ENCODE measurements at regions of chr4 and their contacts with region 1.

Region 1: GRCh38 chr4:36285784-36286480 is 4.5 kb downstream of the DTHD1 start:
- DNase-seq: peak; percentile 72
- H3K4me3 Mint-ChIP-seq: peak overlapping the region; percentile 45
- H3K27ac Mint-ChIP-seq: peak overlapping the region; percentile 91
- H3K4me1 Mint-ChIP-seq: peaks cover 64% of the 10 kb centered on the region
- H3K27me3 Mint-ChIP-seq: no peaks in the 10 kb centered on the region

Region 2: GRCh38 chr4:36187723-36188333 is 98.1 kb before region 1 on chr4:
- intact Hi-C with region 1: loop called (anchors 5 kb)
- DNase-seq: no peak
- H3K4me3 Mint-ChIP-seq: no peak overlapping the region
- H3K27ac Mint-ChIP-seq: no peak overlapping the region
- H3K4me1 Mint-ChIP-seq: peaks cover 39% of the 10 kb centered on the region
- H3K27me3 Mint-ChIP-seq: no peaks in the 10 kb centered on the region

Region 3: GRCh38 chr4:36244257-36245079 is 41.5 kb before region 1 on chr4 and contains the start of gene ARAP2:
- intact Hi-C with region 1: loop called (anchors 1 kb)
- DNase-seq: peak; percentile 68
- H3K4me3 Mint-ChIP-seq: peak within 1 kb of the TSS; percentile 96
- H3K27ac Mint-ChIP-seq: peak within 1 kb of the TSS; percentile 95
- H3K4me1 Mint-ChIP-seq: peaks cover 41% of the 10 kb centered on the region
- H3K27me3 Mint-ChIP-seq: peaks cover 8% of the 10 kb centered on the region
- total RNA-seq, gene ARAP2: 29.5 and 35.8 TPM in 2 replicates

Region 4: GRCh38 chr4:36316607-36317006 is 30.7 kb after region 1 on chr4:
- intact Hi-C with region 1: loop called (anchors 1 kb)
- DNase-seq: no peak
- H3K4me3 Mint-ChIP-seq: no peak overlapping the region
- H3K27ac Mint-ChIP-seq: peak overlapping the region; percentile 66
- H3K4me1 Mint-ChIP-seq: peaks cover 61% of the 10 kb centered on the region
- H3K27me3 Mint-ChIP-seq: no peaks in the 10 kb centered on the region

Region 5: GRCh38 chr4:36353998-36354397 is 68.1 kb after region 1 on chr4:
- intact Hi-C with region 1: no loop called
- DNase-seq: no peak
- H3K4me3 Mint-ChIP-seq: no peak overlapping the region
- H3K27ac Mint-ChIP-seq: no peak overlapping the region
- H3K4me1 Mint-ChIP-seq: peaks cover 22% of the 10 kb centered on the region
- H3K27me3 Mint-ChIP-seq: peaks cover 12% of the 10 kb centered on the region

Region 6: GRCh38 chr4:36394352-36394903 is 108.5 kb after region 1 on chr4:
- intact Hi-C with region 1: loop called (anchors 1 kb)
- DNase-seq: peak; percentile 47
- H3K4me3 Mint-ChIP-seq: peak overlapping the region; percentile 69
- H3K27ac Mint-ChIP-seq: peak overlapping the region; percentile 97
- H3K4me1 Mint-ChIP-seq: peaks cover 26% of the 10 kb centered on the region
- H3K27me3 Mint-ChIP-seq: peaks cover 17% of the 10 kb centered on the region